ENCODE measurements at regions of chr18 and their contacts with region 1.

Region 1: GRCh38 chr18:64100116-64100922 is 48.6 kb downstream of the LINC00305 start:
- DNase-seq: no peak
- ATAC-seq: no peak
- H3K4me3 ChIP-seq: no peak overlapping the region
- H3K27ac ChIP-seq: no peak overlapping the region
- H3K4me1 ChIP-seq: no peaks in the 10 kb centered on the region
- H3K27me3 ChIP-seq: no peaks in the 10 kb centered on the region
- CTCF ChIP-seq: no peak
- EP300 ChIP-seq: no peak
- POLR2A ChIP-seq: no peak
- RAD21 ChIP-seq: no peak

Region 2: DNA sequence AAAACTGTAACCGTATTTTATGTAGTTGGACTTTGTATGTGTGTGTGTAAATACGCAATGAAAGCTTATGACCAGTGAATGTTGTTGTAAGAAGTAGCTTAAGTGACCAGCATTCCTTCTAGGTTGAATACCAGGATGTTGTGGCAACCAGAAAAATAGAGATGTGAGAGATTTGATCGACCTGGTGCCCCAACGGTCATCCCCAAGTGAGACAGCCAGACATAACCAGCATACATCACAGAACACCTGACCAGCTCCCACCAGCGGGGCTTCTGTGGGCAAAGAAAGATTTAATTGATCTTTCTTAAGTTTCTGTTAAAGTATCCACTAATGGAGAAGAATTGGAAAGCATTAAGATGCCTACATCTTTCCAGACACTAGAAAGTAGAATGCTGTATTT is 46.0 kb after region 1 on chr18:
- CTCF ChIA-PET with region 1: no interaction called
- POLR2A ChIA-PET with region 1: no interaction called
- in situ Hi-C with region 1: no loop called
- intact Hi-C with region 1: no loop called
- DNase-seq: no peak
- ATAC-seq: no peak
- H3K4me3 ChIP-seq: no peak overlapping the region
- H3K27ac ChIP-seq: no peak overlapping the region
- H3K4me1 ChIP-seq: no peaks in the 10 kb centered on the region
- H3K27me3 ChIP-seq: no peaks in the 10 kb centered on the region
- CTCF ChIP-seq: no peak
- EP300 ChIP-seq: no peak
- POLR2A ChIP-seq: no peak
- RAD21 ChIP-seq: no peak

Region 3: GRCh38 chr18:64287926-64288325 is 187.6 kb after region 1 on chr18:
- CTCF ChIA-PET with region 1: no interaction called
- POLR2A ChIA-PET with region 1: no interaction called
- in situ Hi-C with region 1: no loop called
- intact Hi-C with region 1: no loop called
- DNase-seq: no peak
- ATAC-seq: no peak
- H3K4me3 ChIP-seq: no peak overlapping the region
- H3K27ac ChIP-seq: no peak overlapping the region
- H3K4me1 ChIP-seq: no peaks in the 10 kb centered on the region
- H3K27me3 ChIP-seq: no peaks in the 10 kb centered on the region
- CTCF ChIP-seq: no peak
- EP300 ChIP-seq: no peak
- POLR2A ChIP-seq: no peak
- RAD21 ChIP-seq: no peak

Region 4: DNA sequence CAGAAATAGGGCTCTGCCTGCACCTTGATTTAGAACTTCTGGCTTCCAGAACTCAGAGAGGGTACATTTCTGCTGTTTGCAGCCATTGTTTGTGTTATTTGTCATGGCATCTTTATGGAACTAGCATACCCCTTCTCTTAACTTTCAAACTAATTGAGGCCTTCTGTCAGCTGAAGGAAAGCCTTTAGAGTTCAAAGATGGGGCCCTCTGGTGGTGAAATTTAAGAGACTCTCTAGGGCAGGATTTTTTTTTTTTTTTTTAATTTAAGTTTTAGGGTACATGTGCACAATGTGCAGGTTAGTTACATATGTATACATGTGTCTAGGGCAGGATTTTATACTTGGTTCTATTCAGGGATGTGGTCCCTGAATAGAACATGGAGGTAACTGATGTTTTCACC is 309.2 kb after region 1 on chr18:
- CTCF ChIA-PET with region 1: no interaction called
- POLR2A ChIA-PET with region 1: no interaction called
- in situ Hi-C with region 1: no loop called
- intact Hi-C with region 1: loop called (anchors 2 kb)
- DNase-seq: no peak
- ATAC-seq: no peak
- H3K4me3 ChIP-seq: no peak overlapping the region
- H3K27ac ChIP-seq: no peak overlapping the region
- H3K4me1 ChIP-seq: no peaks in the 10 kb centered on the region; the same call in 1 of the 2 replicates
- H3K27me3 ChIP-seq: no peaks in the 10 kb centered on the region
- CTCF ChIP-seq: no peak
- EP300 ChIP-seq: no peak
- POLR2A ChIP-seq: no peak
- RAD21 ChIP-seq: no peak

Region 5: GRCh38 chr18:65439188-65439587 is 1338.9 kb after region 1 on chr18:
- CTCF ChIA-PET with region 1: no interaction called
- POLR2A ChIA-PET with region 1: no interaction called
- in situ Hi-C with region 1: no loop called
- intact Hi-C with region 1: loop called (anchors 5 kb)
- DNase-seq: no peak
- ATAC-seq: no peak; the same call in 1 of the 3 replicates
- H3K4me3 ChIP-seq: no peak overlapping the region
- H3K27ac ChIP-seq: no peak overlapping the region
- H3K4me1 ChIP-seq: no peaks in the 10 kb centered on the region
- H3K27me3 ChIP-seq: no peaks in the 10 kb centered on the region
- CTCF ChIP-seq: 0 out of 2 replicates have a peak, but pooled peaks have one; percentile 11
- EP300 ChIP-seq: no peak
- POLR2A ChIP-seq: no peak
- RAD21 ChIP-seq: no peak